ENCODE measurements at regions of chr7 and their contacts with region 1.

Region 1: DNA sequence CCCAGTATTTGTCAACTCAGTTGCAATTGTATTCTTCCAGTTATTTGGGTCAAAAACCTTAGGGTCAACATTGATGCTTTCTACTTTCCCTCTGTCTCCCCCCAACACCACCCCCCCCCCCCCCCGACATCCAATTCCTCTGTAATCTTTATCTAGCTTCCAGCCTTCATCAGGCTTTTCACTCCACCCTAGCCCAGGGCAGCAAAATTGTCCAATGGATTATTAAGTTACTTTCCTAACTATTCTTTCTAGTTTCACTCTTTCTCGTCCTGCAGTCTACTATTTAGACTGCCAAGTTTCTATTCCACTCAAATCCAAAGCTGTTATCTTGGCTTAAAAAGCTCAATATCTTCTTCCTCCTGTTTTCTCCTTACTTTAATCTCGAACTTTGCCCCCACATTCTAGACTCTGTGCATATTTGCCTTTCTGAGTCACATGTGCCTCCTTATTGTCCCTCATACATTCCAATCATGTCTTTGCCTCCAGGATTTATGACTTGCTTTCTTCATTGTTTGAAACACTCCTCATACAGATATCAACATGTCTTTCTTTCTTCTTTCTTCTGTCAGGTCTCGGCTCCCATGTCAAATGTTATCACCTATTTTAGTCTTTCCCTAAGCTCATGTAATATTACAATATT is 196.6 kb upstream of the TMEM196 start:
- DNase-seq: peak; percentile 20 to 87
- H3K4me3 ChIP-seq: peak overlapping the region; percentile 7; the same call in 1 of the 2 replicates
- H3K27ac ChIP-seq: peak overlapping the region; percentile 48
- H3K4me1 ChIP-seq: peaks cover 28% of the 10 kb centered on the region
- H3K27me3 ChIP-seq: no peaks in the 10 kb centered on the region
- CTCF ChIP-seq: no peak

Region 2: DNA sequence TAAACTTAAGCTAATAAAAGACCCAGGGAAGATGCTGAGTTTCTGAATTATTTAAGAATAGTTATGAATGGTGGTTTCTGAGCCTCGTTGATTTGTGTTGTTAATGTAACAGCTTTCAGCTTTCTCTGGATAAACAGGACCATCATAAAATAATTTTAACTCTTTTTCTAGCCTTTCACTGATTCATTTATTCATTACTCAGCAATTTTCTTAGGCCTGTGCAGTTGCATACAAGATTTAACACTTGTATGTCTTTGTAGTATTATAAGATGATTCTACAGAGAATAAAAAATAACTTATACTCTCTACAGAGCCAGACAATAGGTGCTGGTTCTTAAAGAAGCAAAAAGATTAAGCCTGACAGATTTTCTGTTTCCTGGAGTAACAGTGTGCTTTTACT is 225.9 kb before region 1 on chr7:
- CTCF ChIA-PET with region 1: no interaction called
- POLR2A ChIA-PET with region 1: no interaction called
- intact Hi-C with region 1: no loop called
- DNase-seq: no peak
- H3K4me3 ChIP-seq: no peak overlapping the region
- H3K27ac ChIP-seq: no peak overlapping the region
- H3K4me1 ChIP-seq: no peaks in the 10 kb centered on the region
- H3K27me3 ChIP-seq: no peaks in the 10 kb centered on the region
- CTCF ChIP-seq: no peak

Region 3: DNA sequence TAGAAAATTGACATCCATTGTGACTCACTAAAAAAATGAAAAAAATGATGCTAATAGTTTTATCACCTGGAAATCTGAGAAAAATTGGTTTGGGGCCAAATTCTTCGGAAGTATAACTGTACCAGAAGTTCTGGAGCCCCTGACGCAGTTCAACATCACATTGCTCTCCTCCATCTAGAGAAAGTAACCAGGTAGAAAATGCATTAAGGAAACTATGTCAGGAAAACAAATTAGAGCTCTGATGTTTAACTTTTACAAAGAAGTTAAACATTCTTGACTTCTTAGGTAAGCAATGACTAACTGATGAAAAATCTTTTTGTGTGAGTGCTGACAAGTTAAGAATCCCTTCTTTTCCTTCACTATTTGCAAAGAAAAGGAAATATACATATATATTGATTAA is 135.4 kb before region 1 on chr7:
- CTCF ChIA-PET with region 1: no interaction called
- POLR2A ChIA-PET with region 1: no interaction called
- intact Hi-C with region 1: no loop called
- DNase-seq: peak; percentile 34 to 56
- H3K4me3 ChIP-seq: no peak overlapping the region
- H3K27ac ChIP-seq: no peak overlapping the region
- H3K4me1 ChIP-seq: no peaks in the 10 kb centered on the region; the same call in 1 of the 2 replicates
- H3K27me3 ChIP-seq: no peaks in the 10 kb centered on the region
- CTCF ChIP-seq: no peak

Region 4: DNA sequence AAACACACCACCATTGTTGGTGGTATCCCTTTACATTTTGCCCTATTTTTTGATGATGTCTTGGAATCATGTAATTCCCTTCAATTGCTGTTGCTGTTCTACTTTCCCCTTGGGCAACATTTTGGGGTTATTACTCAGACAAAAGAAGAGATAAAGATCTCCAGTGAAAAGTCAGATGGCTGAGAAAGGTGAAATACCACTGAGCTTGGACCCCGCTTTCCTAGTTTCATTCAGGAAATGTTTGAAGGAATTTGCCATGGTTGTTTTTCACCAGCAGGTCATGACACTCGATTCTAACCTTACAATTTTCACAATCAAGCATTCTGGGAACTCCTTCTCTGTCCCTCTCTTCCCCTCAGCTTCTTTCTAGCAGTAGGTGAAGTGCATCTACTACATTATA is 162.7 kb after region 1 on chr7:
- CTCF ChIA-PET with region 1: no interaction called
- POLR2A ChIA-PET with region 1: no interaction called
- intact Hi-C with region 1: loop called (anchors 5 kb)
- DNase-seq: peak; percentile 38 to 81
- H3K4me3 ChIP-seq: no peak overlapping the region
- H3K27ac ChIP-seq: peak overlapping the region; percentile 54
- H3K4me1 ChIP-seq: peaks cover 31% of the 10 kb centered on the region
- H3K27me3 ChIP-seq: no peaks in the 10 kb centered on the region
- CTCF ChIP-seq: no peak

Region 5: DNA sequence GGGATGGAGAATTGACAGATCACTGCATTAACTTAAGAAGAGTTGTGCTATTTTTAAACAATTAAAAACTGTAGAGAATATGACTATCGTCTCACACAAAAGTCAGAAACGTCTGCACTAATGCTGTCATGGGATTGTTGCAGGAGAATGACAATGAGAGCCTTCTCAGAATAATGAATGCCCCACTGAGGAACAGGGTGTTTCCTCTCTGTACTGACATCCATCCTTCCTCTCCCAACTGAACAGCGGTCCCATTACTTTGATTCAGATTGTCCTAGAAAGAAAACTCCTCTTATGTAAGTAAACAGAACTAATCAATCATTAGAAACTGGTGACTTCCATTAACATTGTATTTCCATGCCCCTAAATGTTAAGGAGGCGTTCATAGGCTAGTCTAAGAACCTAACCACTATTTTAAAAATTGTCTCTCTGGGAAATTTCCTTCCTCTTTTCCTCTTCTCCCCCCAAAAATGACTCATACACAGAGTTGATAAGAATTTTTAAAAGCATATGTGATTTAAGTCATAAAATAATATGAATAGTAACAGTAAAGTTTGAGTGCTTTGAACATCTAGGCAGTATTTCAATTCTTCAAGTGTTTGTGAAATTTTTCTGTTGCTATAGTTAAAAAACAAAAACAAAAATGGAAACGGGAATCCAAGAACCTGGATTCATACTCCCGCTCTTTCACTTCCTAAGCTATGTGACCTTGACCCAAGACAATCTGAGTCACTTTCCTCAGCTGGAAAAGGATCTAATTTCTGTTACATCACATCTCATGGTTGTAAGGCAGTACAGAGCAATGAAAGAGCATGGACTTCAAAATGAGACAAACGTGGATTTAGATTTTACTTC is 259.9 kb after region 1 on chr7:
- CTCF ChIA-PET with region 1: no interaction called
- POLR2A ChIA-PET with region 1: no interaction called
- intact Hi-C with region 1: no loop called
- DNase-seq: peak in 1 of 2 experiments; percentile 77
- H3K4me3 ChIP-seq: no peak overlapping the region
- H3K27ac ChIP-seq: no peak overlapping the region
- H3K4me1 ChIP-seq: peaks cover 11% of the 10 kb centered on the region
- H3K27me3 ChIP-seq: no peaks in the 10 kb centered on the region
- CTCF ChIP-seq: no peak

Region 6: DNA sequence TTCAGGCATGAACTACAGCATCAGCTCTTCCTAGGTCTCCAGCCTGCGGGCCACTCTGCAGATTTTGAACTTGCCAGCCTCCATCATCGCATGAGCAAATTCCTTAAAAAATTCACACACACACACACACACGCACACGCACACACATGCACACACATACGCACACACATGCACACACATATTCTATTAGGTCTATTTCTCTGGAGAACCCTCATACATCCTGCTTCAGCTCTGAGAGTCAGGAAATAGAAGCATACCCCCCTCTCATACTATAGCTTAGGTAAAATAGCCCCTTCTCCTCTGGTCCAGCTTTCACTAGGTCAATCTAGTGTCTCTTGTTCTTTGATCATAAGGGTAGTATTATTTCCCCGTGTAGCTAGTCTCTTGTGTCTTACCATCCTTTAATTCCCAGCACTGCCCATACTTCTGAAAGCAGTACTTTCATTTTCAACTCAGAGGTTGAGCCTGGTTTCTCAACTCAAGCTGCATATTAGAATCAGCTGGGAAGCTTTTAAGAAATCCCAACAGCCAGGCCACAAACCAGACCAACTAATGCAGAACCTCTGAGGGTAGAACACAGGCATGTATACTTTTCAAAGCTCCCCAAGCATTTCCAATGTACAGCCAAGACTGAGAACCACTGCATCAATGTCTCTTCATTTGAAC is 329.8 kb after region 1 on chr7:
- CTCF ChIA-PET with region 1: no interaction called
- POLR2A ChIA-PET with region 1: no interaction called
- intact Hi-C with region 1: loop called (anchors 5 kb)
- DNase-seq: no peak
- H3K4me3 ChIP-seq: no peak overlapping the region
- H3K27ac ChIP-seq: no peak overlapping the region
- H3K4me1 ChIP-seq: peaks cover 20% of the 10 kb centered on the region
- H3K27me3 ChIP-seq: no peaks in the 10 kb centered on the region
- CTCF ChIP-seq: no peak